Colonic mucosa (tissue), 4 donors: ENCODE measurements at regions of chr16 and their contacts with region 1.

Region 1: DNA sequence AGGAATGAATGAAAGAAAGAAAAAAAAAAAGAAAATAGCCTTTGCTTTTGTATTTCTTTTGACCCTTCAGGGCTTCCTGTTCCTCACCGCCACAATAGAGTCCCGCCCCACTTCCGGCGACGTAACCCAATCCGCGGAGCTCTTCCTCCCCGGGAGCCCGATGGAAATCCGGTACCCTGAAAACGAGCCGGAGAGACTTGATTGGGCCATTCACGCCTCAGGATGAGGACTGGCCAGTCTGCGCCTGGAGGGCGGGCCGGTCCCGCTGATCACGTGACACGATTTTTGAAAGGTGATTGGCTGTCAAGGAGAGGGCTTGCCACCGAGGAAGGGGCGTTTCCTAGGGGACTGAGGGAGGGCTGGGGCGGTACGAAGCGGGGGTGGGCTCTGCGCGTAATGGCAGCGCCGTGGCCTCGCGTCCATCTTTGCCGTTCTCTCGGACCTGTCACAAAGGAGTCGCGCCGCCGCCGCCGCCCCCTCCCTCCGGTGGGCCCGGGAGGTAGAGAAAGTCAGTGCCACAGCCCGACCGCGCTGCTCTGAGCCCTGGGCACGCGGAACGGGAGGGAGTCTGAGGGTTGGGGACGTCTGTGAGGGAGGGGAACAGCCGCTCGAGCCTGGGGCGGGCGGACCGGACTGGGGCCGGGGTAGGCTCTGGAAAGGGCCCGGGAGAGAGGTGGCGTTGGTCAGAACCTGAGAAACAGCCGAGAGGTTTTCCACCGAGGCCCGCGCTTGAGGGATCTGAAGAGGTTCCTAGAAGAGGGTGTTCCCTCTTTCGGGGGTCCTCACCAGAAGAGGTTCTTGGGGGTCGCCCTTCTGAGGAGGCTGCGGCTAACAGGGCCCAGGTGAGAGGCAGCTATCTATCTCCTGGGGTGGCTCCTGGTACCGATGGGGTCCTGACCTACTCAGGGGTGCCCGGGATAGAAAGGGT is at the starts of genes PSME3IP1 and RSPRY1:
- DNase-seq: peak; percentile 99
- H3K4me3 ChIP-seq: peak within 1 kb of the TSS; percentile 95
- H3K27ac ChIP-seq: peak within 1 kb of the TSS; percentile 93
- H3K4me1 ChIP-seq: peaks cover 4% of the 10 kb centered on the region
- H3K27me3 ChIP-seq: no peaks in the 10 kb centered on the region
- CTCF ChIP-seq: no peak
- total RNA-seq, gene PSME3IP1: 80.9 to 108 TPM
- total RNA-seq, gene RSPRY1: 33.7 to 51.0 TPM

Region 2: GRCh38 chr16:56931892-56932720 is 254.1 kb before region 1 on chr16 and contains the start of gene HERPUD1:
- intact Hi-C with region 1: loop called (anchors 10 kb)
- DNase-seq: peak; percentile 99
- H3K4me3 ChIP-seq: peak within 1 kb of the TSS; percentile 68
- H3K27ac ChIP-seq: peak within 1 kb of the TSS; percentile 95
- H3K4me1 ChIP-seq: peaks cover 4% of the 10 kb centered on the region
- H3K27me3 ChIP-seq: no peaks in the 10 kb centered on the region
- CTCF ChIP-seq: no peak
- total RNA-seq, gene HERPUD1: 130 to 194 TPM